ENCODE measurements at regions of chr16 and their contacts with region 1.

Region 1: DNA sequence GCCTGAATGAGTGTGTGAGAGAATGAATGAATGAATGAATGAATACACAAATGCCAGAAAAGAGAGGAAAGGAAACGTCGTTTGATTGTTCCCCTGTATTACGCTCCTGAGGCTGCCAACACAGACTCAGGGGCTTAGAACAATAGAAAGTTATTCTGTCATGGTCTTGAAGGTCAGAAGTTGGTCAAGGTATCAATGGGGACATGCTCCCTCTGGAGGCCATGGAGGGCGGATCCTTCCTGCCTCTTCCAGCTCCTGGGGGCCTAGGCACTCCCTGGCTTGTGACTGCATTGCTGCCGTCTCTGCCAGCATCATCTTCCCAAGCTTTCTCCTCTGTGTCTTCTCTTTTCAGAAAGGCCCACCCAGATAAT is 1.5 kb upstream of the SLC38A8 start:
- DNase-seq: peak; percentile 48
- ATAC-seq: peak; percentile 87
- H3K4me3 ChIP-seq: no peak overlapping the region
- H3K27ac ChIP-seq: no peak overlapping the region
- H3K4me1 ChIP-seq: no peaks in the 10 kb centered on the region
- H3K27me3 ChIP-seq: no peaks in the 10 kb centered on the region
- CTCF ChIP-seq: peak; percentile 58

Region 2: DNA sequence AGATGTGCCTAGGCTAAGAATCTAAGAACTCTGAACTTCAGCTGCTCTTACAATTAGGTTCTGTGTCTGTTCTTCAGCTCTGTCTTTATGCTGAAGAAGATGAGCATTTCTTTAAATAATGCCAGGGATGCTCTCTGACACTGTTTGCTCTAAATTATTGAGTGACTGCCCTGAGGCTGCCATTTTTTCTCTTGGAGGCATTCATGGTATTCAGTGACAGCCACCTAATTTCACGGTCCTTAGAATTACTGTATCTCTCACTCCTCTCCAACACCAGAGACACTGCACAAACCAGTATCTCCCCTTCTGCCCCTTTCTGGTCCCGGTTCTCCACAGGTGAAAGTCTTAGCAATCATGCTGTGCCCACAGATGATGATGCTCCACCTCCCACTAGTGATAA is 1750.4 kb before region 1 on chr16:
- CTCF ChIA-PET with region 1: no interaction called
- POLR2A ChIA-PET with region 1: no interaction called
- intact Hi-C with region 1: no loop called
- DNase-seq: no peak
- ATAC-seq: no peak
- H3K4me3 ChIP-seq: no peak overlapping the region
- H3K27ac ChIP-seq: no peak overlapping the region
- H3K4me1 ChIP-seq: no peaks in the 10 kb centered on the region
- H3K27me3 ChIP-seq: no peaks in the 10 kb centered on the region
- CTCF ChIP-seq: no peak

Region 3: GRCh38 chr16:83835586-83836566 is 208.2 kb before region 1 on chr16:
- CTCF ChIA-PET with region 1: no interaction called
- POLR2A ChIA-PET with region 1: no interaction called
- intact Hi-C with region 1: no loop called
- DNase-seq: peak; percentile 63
- ATAC-seq: peak; percentile 43
- H3K4me3 ChIP-seq: no peak overlapping the region
- H3K27ac ChIP-seq: no peak overlapping the region
- H3K4me1 ChIP-seq: peaks cover 8% of the 10 kb centered on the region; the same call in 1 of the 2 replicates
- H3K27me3 ChIP-seq: peaks cover 47% of the 10 kb centered on the region
- CTCF ChIP-seq: no peak

Region 4: GRCh38 chr16:83940630-83941378 is 103.3 kb before region 1 on chr16:
- CTCF ChIA-PET with region 1: no interaction called
- POLR2A ChIA-PET with region 1: no interaction called
- intact Hi-C with region 1: no loop called
- DNase-seq: no peak
- ATAC-seq: no peak
- H3K4me3 ChIP-seq: no peak overlapping the region
- H3K27ac ChIP-seq: no peak overlapping the region
- H3K4me1 ChIP-seq: no peaks in the 10 kb centered on the region
- H3K27me3 ChIP-seq: no peaks in the 10 kb centered on the region
- CTCF ChIP-seq: no peak

Region 5: GRCh38 chr16:83967806-83968305 is 76.2 kb before region 1 on chr16 and contains the start of gene NECAB2:
- CTCF ChIA-PET with region 1: no interaction called
- POLR2A ChIA-PET with region 1: interaction called, 3 read pairs
- intact Hi-C with region 1: loop called (anchors 1 kb)
- DNase-seq: peak; percentile 38
- ATAC-seq: peak; percentile 72
- H3K4me3 ChIP-seq: no peak within 1 kb of the TSS
- H3K27ac ChIP-seq: no peak within 1 kb of the TSS
- H3K4me1 ChIP-seq: no peaks in the 10 kb centered on the region
- H3K27me3 ChIP-seq: no peaks in the 10 kb centered on the region
- CTCF ChIP-seq: peak; percentile 62
- total RNA-seq, gene NECAB2: 0.22 and 2.0 TPM in 2 replicates

Region 6: DNA sequence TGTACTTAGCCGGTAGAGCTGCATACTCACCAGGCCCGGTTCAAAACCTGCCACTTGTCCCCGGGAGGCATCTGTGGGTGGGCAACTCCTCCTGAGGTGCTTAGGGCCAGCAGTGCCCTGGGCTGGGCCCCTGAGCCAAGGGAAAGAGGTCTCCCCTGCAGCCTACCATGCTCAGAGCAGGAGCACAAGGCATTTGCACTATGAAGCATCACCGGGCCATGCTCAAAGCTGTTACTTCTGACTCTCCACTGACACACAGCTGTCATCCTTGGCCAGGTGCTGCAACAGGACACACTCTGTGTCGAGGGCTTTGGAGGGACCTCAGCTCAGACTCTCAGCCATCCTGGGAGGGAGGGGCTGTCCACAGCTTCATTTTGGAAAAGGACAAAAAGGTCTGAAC is 38.7 kb before region 1 on chr16:
- CTCF ChIA-PET with region 1: no interaction called
- POLR2A ChIA-PET with region 1: no interaction called
- intact Hi-C with region 1: no loop called
- DNase-seq: no peak
- ATAC-seq: no peak
- H3K4me3 ChIP-seq: no peak overlapping the region
- H3K27ac ChIP-seq: no peak overlapping the region
- H3K4me1 ChIP-seq: no peaks in the 10 kb centered on the region
- H3K27me3 ChIP-seq: no peaks in the 10 kb centered on the region
- CTCF ChIP-seq: no peak

Measured in PC-3 (cell line).